Heart right ventricle (tissue), 16 donors: ENCODE measurements at regions of chr12 and their contacts with region 1.

Region 1: GRCh38 chr12:32896432-32897273 is at the start of gene PKP2:
- DNase-seq: peak; percentile 28 to 68
- ATAC-seq: peak; percentile 76 to 93 (median 85)
- H3K4me3 ChIP-seq: peak within 1 kb of the TSS; percentile 45 to 92 (median 72)
- H3K27ac ChIP-seq: peak within 1 kb of the TSS; percentile 79 to 94 (median 87)
- H3K4me1 ChIP-seq: peaks cover 0 to 46% (median 12%) of the 10 kb centered on the region in 9 donors
- H3K27me3 ChIP-seq: peaks cover 0 to 44% (median 23%) of the 10 kb centered on the region in 7 donors
- CTCF ChIP-seq: no peak
- total RNA-seq, gene PKP2: 280 to 639 (median 425) TPM

Region 2: GRCh38 chr12:32811686-32812392 is 84.8 kb before region 1 on chr12:
- intact Hi-C with region 1: loop called in 2 of 10 experiments (anchors 10 kb)
- DNase-seq: no peak
- ATAC-seq: peak in 5 of 8 donors; percentile 30 to 45 (median 34)
- H3K4me3 ChIP-seq: no peak overlapping the region
- H3K27ac ChIP-seq: peak overlapping the region in 6 of 10 donors; percentile 18 to 65 (median 55)
- H3K4me1 ChIP-seq: peaks cover 0 to 51% (median 14%) of the 10 kb centered on the region in 9 donors
- H3K27me3 ChIP-seq: no peaks in the 10 kb centered on the region
- CTCF ChIP-seq: no peak

Region 3: GRCh38 chr12:32821710-32822109 is 74.9 kb before region 1 on chr12:
- intact Hi-C with region 1: loop called in 5 of 10 experiments (anchors 5 to 10 kb)
- DNase-seq: no peak
- ATAC-seq: peak; percentile 57 to 91 (median 84)
- H3K4me3 ChIP-seq: peak overlapping the region in 5 of 10 donors; percentile 0 to 33 (median 26)
- H3K27ac ChIP-seq: peak overlapping the region; percentile 50 to 91 (median 81)
- H3K4me1 ChIP-seq: peaks cover 0 to 87% (median 6%) of the 10 kb centered on the region in 9 donors
- H3K27me3 ChIP-seq: no peaks in the 10 kb centered on the region
- CTCF ChIP-seq: no peak

Region 4: DNA sequence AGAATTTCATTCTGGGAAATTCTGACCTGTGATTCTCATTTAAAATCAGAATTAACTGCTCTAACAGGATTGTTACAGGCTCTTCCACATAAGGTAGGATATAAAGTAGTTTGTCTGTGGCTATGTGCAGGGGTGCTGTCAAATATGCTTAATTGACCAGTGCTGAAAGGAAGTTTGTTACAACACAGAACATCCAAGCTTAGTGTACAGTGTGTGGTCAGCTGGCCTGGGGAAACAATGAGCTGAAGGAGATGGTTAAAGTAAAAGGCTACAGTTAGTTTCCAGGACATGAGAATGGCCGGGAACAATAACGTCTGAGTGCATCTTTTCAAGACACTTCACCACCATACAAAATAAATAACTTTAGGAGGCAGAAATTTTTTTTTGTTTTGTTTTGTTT is 68.1 kb before region 1 on chr12:
- intact Hi-C with region 1: loop called in 4 of 10 experiments (anchors 5 kb)
- DNase-seq: no peak
- ATAC-seq: peak in 7 of 8 donors; percentile 9 to 56 (median 43)
- H3K4me3 ChIP-seq: no peak overlapping the region
- H3K27ac ChIP-seq: peak overlapping the region; percentile 8 to 91 (median 72)
- H3K4me1 ChIP-seq: peaks cover 0 to 61% (median 11%) of the 10 kb centered on the region in 9 donors
- H3K27me3 ChIP-seq: no peaks in the 10 kb centered on the region
- CTCF ChIP-seq: no peak

Region 5: DNA sequence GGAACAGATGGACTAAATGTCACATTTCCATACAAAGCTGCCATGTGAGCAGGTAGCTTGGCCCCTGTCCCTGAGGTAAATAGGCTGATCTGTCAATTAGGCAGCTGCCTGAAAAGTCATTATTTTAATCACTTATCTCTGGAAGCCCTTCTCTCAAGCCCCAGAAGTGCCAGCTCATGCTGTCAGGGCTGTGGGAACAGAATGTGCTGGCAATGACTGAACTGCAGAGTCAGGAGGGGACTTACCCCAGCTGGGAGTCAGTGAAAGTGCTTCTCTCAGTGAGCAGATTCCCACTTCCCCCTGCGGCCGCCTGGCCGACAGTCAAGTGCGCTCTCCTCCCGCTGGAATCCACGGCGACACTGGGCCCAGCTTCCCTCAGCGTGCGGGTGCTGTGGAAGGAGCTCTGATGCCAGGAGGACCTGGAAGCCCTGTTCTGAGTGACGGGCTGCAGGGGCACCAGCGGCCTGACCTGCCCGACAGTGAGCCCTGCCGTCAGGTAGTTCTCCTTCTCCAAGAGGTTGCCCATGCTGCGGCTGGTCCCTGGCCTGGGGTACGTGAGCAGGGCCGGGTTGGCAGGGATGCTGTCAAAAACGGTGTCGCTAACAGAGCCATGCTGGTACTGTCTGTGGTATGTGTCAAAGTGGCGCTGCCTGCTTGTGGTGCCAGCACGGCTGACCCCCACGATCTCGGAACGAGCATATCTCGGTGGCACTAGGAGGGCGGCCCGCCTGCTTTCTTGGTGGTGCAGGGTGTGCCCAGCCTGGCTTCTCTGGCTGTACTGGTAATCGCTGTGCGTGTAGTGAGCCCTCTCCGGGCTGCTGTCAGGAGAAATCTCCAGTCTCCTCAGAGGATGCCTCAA is 18.8 kb before region 1 on chr12:
- intact Hi-C with region 1: loop called in 1 of 10 experiments (anchors 2 kb)
- DNase-seq: peak; percentile 80 to 85
- ATAC-seq: peak; percentile 85 to 93 (median 92)
- H3K4me3 ChIP-seq: peak overlapping the region in 8 of 10 donors; percentile 6 to 33 (median 29)
- H3K27ac ChIP-seq: peak overlapping the region; percentile 68 to 91 (median 84)
- H3K4me1 ChIP-seq: peaks cover 0 to 85% (median 14%) of the 10 kb centered on the region in 9 donors
- H3K27me3 ChIP-seq: no peaks in the 10 kb centered on the region
- CTCF ChIP-seq: no peak